GM10248 (cell line): ENCODE measurements at regions of chr5 and their contacts with region 1.

Region 1: GRCh38 chr5:53023969-53024368 is 34.8 kb downstream of the ITGA2 start:
- DNase-seq: peak; percentile 35
- CTCF ChIP-seq: no peak

Region 2: GRCh38 chr5:53035868-53036381 is 12.0 kb after region 1 on chr5:
- CTCF ChIA-PET with region 1: interaction called, 10 read pairs
- POLR2A ChIA-PET with region 1: no interaction called
- DNase-seq: peak; percentile 26
- CTCF ChIP-seq: peak; percentile 34

Region 3: GRCh38 chr5:53109443-53110127 is 85.6 kb after region 1 on chr5 and contains the start of gene MOCS2:
- CTCF ChIA-PET with region 1: no interaction called
- POLR2A ChIA-PET with region 1: no interaction called
- DNase-seq: peak; percentile 98
- CTCF ChIP-seq: no peak

Region 4: DNA sequence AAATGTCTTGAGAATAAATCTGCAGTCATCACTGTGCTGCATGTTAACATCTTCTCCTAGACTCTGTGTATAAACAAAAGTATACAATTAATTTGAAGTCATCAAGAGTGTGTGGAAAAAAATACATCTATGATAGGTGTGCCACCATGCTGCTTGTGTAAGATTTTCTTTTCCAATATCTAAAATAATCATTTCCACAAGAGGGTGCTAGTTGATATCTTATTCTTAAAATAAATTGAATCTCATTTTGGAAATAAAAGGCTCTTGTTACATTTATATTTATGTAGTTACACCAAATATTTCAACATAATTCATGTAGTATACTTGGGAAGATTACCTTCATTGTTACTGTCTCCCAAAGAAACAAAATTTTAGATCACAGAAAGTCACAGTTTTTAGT is 99.7 kb after region 1 on chr5:
- CTCF ChIA-PET with region 1: no interaction called
- POLR2A ChIA-PET with region 1: no interaction called
- DNase-seq: no peak
- CTCF ChIP-seq: no peak